Activated naive CD4-positive, alpha-beta T cell treated with anti-CD3 and anti-CD28 coated beads for 36 hours (primary cell): ENCODE measurements at regions of chr17 and their contacts with region 1.

Region 1: DNA sequence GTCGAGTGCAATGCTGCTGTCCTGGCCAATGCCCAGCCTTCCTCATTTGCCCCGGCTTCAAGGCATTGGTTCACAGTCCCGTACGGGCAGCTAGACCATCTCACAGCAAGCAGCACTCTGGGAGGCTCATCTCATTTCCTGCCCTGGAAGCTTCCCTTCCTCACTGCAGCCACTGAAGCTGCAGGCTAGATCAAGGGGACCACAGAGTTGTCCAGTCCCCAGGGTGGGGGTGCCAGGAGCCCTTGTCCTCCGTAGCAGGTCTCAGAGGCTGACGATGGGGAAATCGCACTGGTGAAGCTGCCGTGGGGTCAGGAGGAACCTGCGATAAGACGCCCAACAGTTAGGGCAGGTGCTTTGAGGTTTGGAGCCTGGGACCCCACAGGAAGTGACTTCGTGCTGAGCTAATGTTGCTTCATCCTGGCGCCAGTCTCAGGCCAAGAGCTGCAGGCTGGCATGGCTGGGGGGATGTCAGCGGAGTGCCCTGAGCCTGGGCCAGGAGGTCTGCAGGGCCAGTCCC is at the start of gene SPNS3:
- DNase-seq: peak; percentile 64
- H3K4me3 Mint-ChIP-seq: peak within 1 kb of the TSS; percentile 74
- H3K27ac Mint-ChIP-seq: no peak within 1 kb of the TSS
- H3K4me1 Mint-ChIP-seq: peaks cover 25% of the 10 kb centered on the region
- H3K27me3 Mint-ChIP-seq: no peaks in the 10 kb centered on the region
- total RNA-seq, gene SPNS3: 17.7 to 20.4 TPM

Region 2: GRCh38 chr17:4480929-4481898 is 47.6 kb after region 1 on chr17:
- CTCF ChIA-PET with region 1: no interaction called
- intact Hi-C with region 1: loop called (anchors 5 kb)
- DNase-seq: peak; percentile 63
- H3K4me3 Mint-ChIP-seq: peak overlapping the region; percentile 61
- H3K27ac Mint-ChIP-seq: peak overlapping the region; percentile 77
- H3K4me1 Mint-ChIP-seq: peaks cover 48% of the 10 kb centered on the region
- H3K27me3 Mint-ChIP-seq: no peaks in the 10 kb centered on the region